Spleen (tissue), 13 donors: ENCODE measurements at regions of chr14 and their contacts with region 1.

Region 1: GRCh38 chr14:67837011-67837624 is 17.5 kb downstream of the RAD51B start:
- DNase-seq: no peak
- H3K4me3 ChIP-seq: no peak overlapping the region
- H3K27ac ChIP-seq: no peak overlapping the region
- H3K4me1 ChIP-seq: peaks cover 0 to 11% (median 0%) of the 10 kb centered on the region in 6 donors
- H3K27me3 ChIP-seq: no peaks in the 10 kb centered on the region
- CTCF ChIP-seq: peak; percentile 33 to 90 (median 71)
- POLR2A ChIP-seq: no peak

Region 2: GRCh38 chr14:67683842-67684241 is 153.3 kb before region 1 on chr14:
- intact Hi-C with region 1: no loop called
- DNase-seq: no peak
- H3K4me3 ChIP-seq: no peak overlapping the region
- H3K27ac ChIP-seq: no peak overlapping the region
- H3K4me1 ChIP-seq: peaks cover 0 to 12% (median 3%) of the 10 kb centered on the region in 6 donors
- H3K27me3 ChIP-seq: no peaks in the 10 kb centered on the region
- CTCF ChIP-seq: no peak
- POLR2A ChIP-seq: no peak

Region 3: DNA sequence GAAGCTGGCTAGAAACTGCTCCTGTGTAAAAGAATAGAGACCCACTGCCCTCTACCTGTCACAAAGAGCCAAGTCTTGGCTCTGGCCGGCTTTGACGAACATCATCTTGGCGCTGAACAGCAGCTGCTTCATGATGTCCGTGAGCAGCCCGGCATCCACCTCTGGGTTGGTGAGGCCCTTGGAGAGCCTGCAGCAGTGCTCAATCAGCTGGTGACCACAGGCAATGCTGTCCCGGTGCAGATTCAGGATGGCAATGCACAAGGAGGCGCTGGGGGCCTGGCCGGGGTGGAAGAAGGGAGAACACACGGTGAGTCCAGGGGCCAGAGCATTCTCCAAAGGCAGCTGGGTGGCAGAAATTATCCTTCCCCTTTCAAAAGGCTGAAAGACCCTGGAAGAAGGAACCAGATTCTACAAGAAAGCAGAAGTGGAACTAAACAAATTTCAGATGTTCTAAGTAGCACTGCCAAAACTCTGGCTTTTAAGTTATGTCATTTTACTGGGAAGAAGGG is 70.9 kb before region 1 on chr14:
- intact Hi-C with region 1: no loop called
- DNase-seq: no peak
- H3K4me3 ChIP-seq: no peak overlapping the region
- H3K27ac ChIP-seq: peak overlapping the region in 5 of 8 donors; percentile 9 to 68 (median 60)
- H3K4me1 ChIP-seq: peaks cover 0 to 28% (median 7%) of the 10 kb centered on the region in 6 donors
- H3K27me3 ChIP-seq: no peaks in the 10 kb centered on the region
- CTCF ChIP-seq: no peak
- POLR2A ChIP-seq: no peak

Region 4: DNA sequence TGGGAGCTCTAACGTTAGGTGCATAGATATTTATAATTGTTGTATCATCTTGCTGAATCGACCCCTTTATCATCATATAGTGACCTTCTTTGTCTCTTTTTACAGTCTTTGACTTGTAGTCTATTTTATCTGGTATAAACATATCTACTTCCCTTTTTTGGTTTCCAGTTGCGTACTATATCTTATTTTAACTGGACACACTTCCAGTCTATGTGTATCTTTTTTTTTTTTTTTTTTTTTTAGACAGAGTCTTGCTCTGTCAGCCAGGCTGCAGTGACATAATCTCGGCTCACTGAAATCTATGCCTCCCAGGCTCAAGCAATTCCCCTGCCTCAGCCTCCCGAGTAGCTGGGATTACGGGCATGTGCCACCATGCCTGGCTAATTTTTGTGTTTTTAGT is 997.7 kb after region 1 on chr14:
- intact Hi-C with region 1: loop called (anchors 10 kb)
- DNase-seq: no peak
- H3K4me3 ChIP-seq: no peak overlapping the region
- H3K27ac ChIP-seq: no peak overlapping the region
- H3K4me1 ChIP-seq: no peaks in the 10 kb centered on the region
- H3K27me3 ChIP-seq: no peaks in the 10 kb centered on the region
- CTCF ChIP-seq: no peak
- POLR2A ChIP-seq: no peak